ENCODE measurements at regions of chr16 and their contacts with region 1.

Region 1: GRCh38 chr16:48556913-48557351 is 53.0 kb downstream of the N4BP1 start:
- DNase-seq: peak; percentile 52
- ATAC-seq: peak; percentile 89
- H3K4me3 Mint-ChIP-seq: no peak overlapping the region
- H3K27ac Mint-ChIP-seq: peak overlapping the region; percentile 64
- H3K4me1 Mint-ChIP-seq: peaks cover 83% of the 10 kb centered on the region
- H3K27me3 Mint-ChIP-seq: no peaks in the 10 kb centered on the region

Region 2: GRCh38 chr16:48459167-48459566 is 97.8 kb before region 1 on chr16:
- CTCF ChIA-PET with region 1: no interaction called
- POLR2A ChIA-PET with region 1: no interaction called
- intact Hi-C with region 1: loop called (anchors 1 to 2 kb)
- DNase-seq: no peak
- ATAC-seq: no peak
- H3K4me3 Mint-ChIP-seq: no peak overlapping the region
- H3K27ac Mint-ChIP-seq: no peak overlapping the region
- H3K4me1 Mint-ChIP-seq: peaks cover 9% of the 10 kb centered on the region
- H3K27me3 Mint-ChIP-seq: peaks cover 35% of the 10 kb centered on the region

Region 3: DNA sequence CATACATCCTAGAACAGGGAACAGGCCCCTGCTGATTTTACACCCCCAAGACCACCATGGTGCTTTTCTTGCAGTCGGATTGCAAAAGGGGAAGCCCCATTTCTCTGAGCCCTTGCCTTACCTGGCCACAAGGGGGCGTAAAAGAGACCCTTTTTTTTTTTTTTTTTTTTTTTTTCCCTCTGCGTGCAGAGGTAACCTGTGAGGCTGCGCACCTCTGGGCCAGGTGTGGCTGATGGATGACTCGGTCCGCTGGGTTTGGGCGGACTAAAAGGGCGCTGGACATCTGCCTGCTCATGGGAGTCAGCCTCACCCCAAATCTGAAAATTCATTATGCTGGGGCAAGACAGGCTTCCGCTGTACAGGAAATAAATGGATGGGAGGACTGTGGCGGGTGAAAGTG is 443.7 kb after region 1 on chr16:
- CTCF ChIA-PET with region 1: no interaction called
- POLR2A ChIA-PET with region 1: no interaction called
- intact Hi-C with region 1: no loop called
- DNase-seq: no peak
- ATAC-seq: no peak
- H3K4me3 Mint-ChIP-seq: no peak overlapping the region
- H3K27ac Mint-ChIP-seq: no peak overlapping the region
- H3K4me1 Mint-ChIP-seq: no peaks in the 10 kb centered on the region
- H3K27me3 Mint-ChIP-seq: peaks cover 3% of the 10 kb centered on the region